CD4-positive, alpha-beta T cell (primary cell): ENCODE measurements at regions of chrX and their contacts with region 1.

Region 1: GRCh38 chrX:47482512-47483309 is at the start of gene ZNF41:
- DNase-seq: peak; percentile 52 to 93 (median 74)
- ATAC-seq: peak; percentile 81
- H3K4me3 ChIP-seq: peak within 1 kb of the TSS; percentile 88
- H3K4me3 Mint-ChIP-seq: peak within 1 kb of the TSS; percentile 96
- H3K27ac ChIP-seq: peak within 1 kb of the TSS; percentile 84
- H3K27ac Mint-ChIP-seq: peak within 1 kb of the TSS; percentile 94
- H3K4me1 ChIP-seq: peaks cover 21% of the 10 kb centered on the region
- H3K4me1 Mint-ChIP-seq: peaks cover 45% of the 10 kb centered on the region
- H3K27me3 ChIP-seq: no peaks in the 10 kb centered on the region
- H3K27me3 Mint-ChIP-seq: no peaks in the 10 kb centered on the region
- CTCF ChIP-seq: no peak
- total RNA-seq, gene ZNF41: 3.1 to 3.9 TPM

Region 2: GRCh38 chrX:47384502-47384901 is 98.2 kb before region 1 on chrX:
- CTCF ChIA-PET with region 1: no interaction called
- POLR2A ChIA-PET with region 1: no interaction called
- intact Hi-C with region 1: no loop called
- DNase-seq: peak; percentile 51 to 87 (median 63)
- ATAC-seq: peak; percentile 50
- H3K4me3 ChIP-seq: no peak overlapping the region
- H3K4me3 Mint-ChIP-seq: peak overlapping the region; percentile 51
- H3K27ac ChIP-seq: no peak overlapping the region
- H3K27ac Mint-ChIP-seq: peak overlapping the region; percentile 74
- H3K4me1 ChIP-seq: peaks cover 16% of the 10 kb centered on the region
- H3K4me1 Mint-ChIP-seq: peaks cover 29% of the 10 kb centered on the region
- H3K27me3 ChIP-seq: no peaks in the 10 kb centered on the region
- H3K27me3 Mint-ChIP-seq: no peaks in the 10 kb centered on the region
- CTCF ChIP-seq: peak; percentile 70

Region 3: GRCh38 chrX:47530049-47530448 is 47.3 kb after region 1 on chrX:
- CTCF ChIA-PET with region 1: no interaction called
- POLR2A ChIA-PET with region 1: no interaction called
- intact Hi-C with region 1: no loop called
- DNase-seq: no peak
- ATAC-seq: no peak
- H3K4me3 ChIP-seq: no peak overlapping the region
- H3K4me3 Mint-ChIP-seq: no peak overlapping the region
- H3K27ac ChIP-seq: no peak overlapping the region
- H3K27ac Mint-ChIP-seq: no peak overlapping the region
- H3K4me1 ChIP-seq: no peaks in the 10 kb centered on the region
- H3K4me1 Mint-ChIP-seq: no peaks in the 10 kb centered on the region
- H3K27me3 ChIP-seq: no peaks in the 10 kb centered on the region
- H3K27me3 Mint-ChIP-seq: no peaks in the 10 kb centered on the region
- CTCF ChIP-seq: no peak

Region 4: DNA sequence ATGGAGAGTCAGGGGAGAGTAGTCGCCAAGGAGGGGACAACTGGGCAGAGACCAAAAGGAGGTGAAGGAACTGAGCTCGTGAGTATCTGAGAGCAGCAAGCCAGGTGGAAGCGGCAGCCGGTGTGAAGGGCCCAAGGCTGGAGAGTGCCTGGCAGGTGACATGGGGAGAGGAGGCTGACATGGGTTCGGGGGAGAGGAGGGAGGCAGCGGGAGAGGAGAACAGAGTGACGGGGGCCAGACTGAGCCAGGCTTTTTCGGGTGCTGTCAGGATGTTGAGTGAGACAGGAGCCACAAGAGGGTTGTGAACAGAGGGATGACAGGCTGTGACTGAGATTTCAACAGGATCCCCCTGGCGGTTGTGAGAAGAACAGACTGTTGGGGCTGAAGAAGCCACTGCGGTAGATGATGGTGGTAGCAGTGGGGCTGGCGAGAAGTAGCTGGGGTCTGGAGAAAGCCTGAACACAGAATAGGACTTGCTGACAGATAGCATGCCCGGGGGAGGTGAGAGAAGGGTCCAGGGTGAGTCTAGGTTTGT is 161.9 kb after region 1 on chrX:
- CTCF ChIA-PET with region 1: no interaction called
- POLR2A ChIA-PET with region 1: no interaction called
- intact Hi-C with region 1: loop called in 1 of 2 experiments (anchors 5 kb)
- DNase-seq: peak in 3 of 14 experiments; percentile 24 to 48 (median 37)
- ATAC-seq: peak; percentile 61
- H3K4me3 ChIP-seq: no peak overlapping the region
- H3K4me3 Mint-ChIP-seq: no peak overlapping the region
- H3K27ac ChIP-seq: no peak overlapping the region
- H3K27ac Mint-ChIP-seq: peak overlapping the region; percentile 49
- H3K4me1 ChIP-seq: peaks cover 25% of the 10 kb centered on the region
- H3K4me1 Mint-ChIP-seq: peaks cover 44% of the 10 kb centered on the region
- H3K27me3 ChIP-seq: no peaks in the 10 kb centered on the region
- H3K27me3 Mint-ChIP-seq: no peaks in the 10 kb centered on the region
- CTCF ChIP-seq: no peak

Region 5: GRCh38 chrX:47650164-47651042 is 167.7 kb after region 1 on chrX and contains the start of gene ELK1:
- CTCF ChIA-PET with region 1: no interaction called
- POLR2A ChIA-PET with region 1: no interaction called
- intact Hi-C with region 1: loop called (anchors 5 to 10 kb)
- DNase-seq: peak; percentile 75 to 96 (median 84)
- ATAC-seq: peak; percentile 88
- H3K4me3 ChIP-seq: peak within 1 kb of the TSS; percentile 83
- H3K4me3 Mint-ChIP-seq: peak within 1 kb of the TSS; percentile 94
- H3K27ac ChIP-seq: peak within 1 kb of the TSS; percentile 65 to 76
- H3K27ac Mint-ChIP-seq: peak within 1 kb of the TSS; percentile 89
- H3K4me1 ChIP-seq: peaks cover 29% of the 10 kb centered on the region
- H3K4me1 Mint-ChIP-seq: peaks cover 39% of the 10 kb centered on the region
- H3K27me3 ChIP-seq: no peaks in the 10 kb centered on the region
- H3K27me3 Mint-ChIP-seq: no peaks in the 10 kb centered on the region
- CTCF ChIP-seq: no peak
- total RNA-seq, gene ELK1: 38.9 to 40.5 TPM

Region 6: GRCh38 chrX:47885501-47885900 is 402.8 kb after region 1 on chrX:
- CTCF ChIA-PET with region 1: no interaction called
- POLR2A ChIA-PET with region 1: no interaction called
- intact Hi-C with region 1: no loop called
- DNase-seq: no peak
- ATAC-seq: no peak
- H3K4me3 ChIP-seq: no peak overlapping the region
- H3K4me3 Mint-ChIP-seq: no peak overlapping the region
- H3K27ac ChIP-seq: no peak overlapping the region
- H3K27ac Mint-ChIP-seq: no peak overlapping the region
- H3K4me1 ChIP-seq: no peaks in the 10 kb centered on the region
- H3K4me1 Mint-ChIP-seq: no peaks in the 10 kb centered on the region
- H3K27me3 ChIP-seq: no peaks in the 10 kb centered on the region
- H3K27me3 Mint-ChIP-seq: no peaks in the 10 kb centered on the region
- CTCF ChIP-seq: no peak